ENCODE measurements at regions of chr12 and their contacts with region 1.

Region 1: GRCh38 chr12:51823875-51824565 is 24.5 kb downstream of the FIGNL2 start:
- DNase-seq: peak in 5 of 9 donors; percentile 27 to 47 (median 36)
- ATAC-seq: no peak
- H3K4me3 ChIP-seq: no peak overlapping the region
- H3K4me3 Mint-ChIP-seq: peak overlapping the region in 3 of 10 donors; percentile 4 to 17 (median 6)
- H3K27ac ChIP-seq: no peak overlapping the region
- H3K27ac Mint-ChIP-seq: peak overlapping the region in 8 of 9 donors; percentile 16 to 68 (median 54)
- H3K4me1 ChIP-seq: peaks cover 5 to 24% of the 10 kb centered on the region in 2 donors
- H3K4me1 Mint-ChIP-seq: peaks cover 29 to 41% (median 32%) of the 10 kb centered on the region in 7 donors
- H3K27me3 ChIP-seq: no peaks in the 10 kb centered on the region
- H3K27me3 Mint-ChIP-seq: peaks cover 0 to 14% (median 0%) of the 10 kb centered on the region in 5 donors

Region 2: DNA sequence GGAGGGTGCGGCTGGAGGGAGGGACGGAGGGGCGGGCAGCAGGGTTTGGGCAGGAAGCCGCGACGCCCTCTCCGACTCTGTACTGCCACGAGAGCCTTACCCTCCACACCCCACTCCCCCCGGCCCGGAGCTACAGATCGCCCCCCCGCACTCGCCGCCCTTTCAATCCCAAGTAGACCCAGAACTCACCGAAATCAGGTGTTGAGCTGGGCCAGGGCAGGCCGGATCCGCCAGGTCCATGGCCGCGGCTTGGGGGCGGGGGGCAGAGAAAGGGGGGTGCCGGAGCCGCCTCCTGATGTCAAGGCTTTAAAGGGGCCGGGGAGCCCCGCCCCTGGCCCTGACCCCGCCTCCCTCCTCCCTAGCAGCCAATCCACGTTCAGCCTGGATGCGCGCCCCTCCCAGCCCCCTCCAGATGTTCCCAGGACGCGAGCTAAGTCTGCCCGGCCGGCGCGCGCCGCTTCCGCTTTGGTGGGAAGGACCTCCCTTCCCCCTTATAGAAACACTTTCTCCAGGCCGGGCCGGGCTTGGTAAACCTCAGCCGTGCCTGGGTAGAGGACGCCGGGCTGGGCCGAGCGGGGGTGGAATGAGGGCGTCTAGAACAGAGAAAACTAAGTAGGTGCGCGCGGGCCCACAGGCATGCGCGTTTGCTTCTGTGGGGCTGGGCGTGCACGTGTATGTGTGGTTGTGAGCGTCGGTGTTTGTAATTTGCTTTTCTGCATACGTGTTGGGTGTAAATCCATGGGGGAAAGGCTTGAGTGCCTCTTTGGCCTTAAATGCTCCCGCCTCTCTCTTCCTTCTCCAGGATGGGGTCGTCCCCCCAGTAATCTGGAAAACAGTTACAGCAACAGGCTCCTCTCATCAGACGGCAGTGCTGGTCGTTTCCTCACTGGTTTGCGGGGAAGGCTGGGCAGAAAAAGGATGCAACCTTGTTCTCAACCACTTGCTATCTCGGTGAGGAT is 1995.6 kb before region 1 on chr12 and contains the start of gene NCKAP5L:
- CTCF ChIA-PET with region 1: no interaction called
- POLR2A ChIA-PET with region 1: no interaction called
- intact Hi-C with region 1: loop called in 1 of 2 experiments (anchors 5 kb)
- DNase-seq: peak; percentile 86 to 94 (median 93)
- ATAC-seq: peak; percentile 96
- H3K4me3 ChIP-seq: peak within 1 kb of the TSS; percentile 82
- H3K4me3 Mint-ChIP-seq: peak within 1 kb of the TSS; percentile 88 to 99 (median 96)
- H3K27ac ChIP-seq: peak within 1 kb of the TSS; percentile 79
- H3K27ac Mint-ChIP-seq: peak within 1 kb of the TSS; percentile 89 to 99 (median 95)
- H3K4me1 ChIP-seq: peaks cover 8 to 16% of the 10 kb centered on the region in 2 donors
- H3K4me1 Mint-ChIP-seq: peaks cover 7 to 42% (median 30%) of the 10 kb centered on the region in 7 donors
- H3K27me3 ChIP-seq: no peaks in the 10 kb centered on the region
- H3K27me3 Mint-ChIP-seq: peaks cover 0 to 13% (median 0%) of the 10 kb centered on the region in 5 donors
- total RNA-seq, gene NCKAP5L: 4.3 to 27.5 (median 12.0) TPM

Region 3: GRCh38 chr12:51531978-51532497 is 292.0 kb before region 1 on chr12:
- CTCF ChIA-PET with region 1: interaction called, 4 read pairs
- POLR2A ChIA-PET with region 1: no interaction called
- intact Hi-C with region 1: loop called in 1 of 2 experiments (anchors 1 kb)
- DNase-seq: peak; percentile 44 to 78 (median 68)
- ATAC-seq: peak; percentile 94
- H3K4me3 ChIP-seq: no peak overlapping the region
- H3K4me3 Mint-ChIP-seq: no peak overlapping the region
- H3K27ac ChIP-seq: no peak overlapping the region
- H3K27ac Mint-ChIP-seq: peak overlapping the region in 5 of 9 donors; percentile 11 to 52 (median 32)
- H3K4me1 ChIP-seq: peaks cover 0 to 4% of the 10 kb centered on the region in 2 donors
- H3K4me1 Mint-ChIP-seq: peaks cover 0 to 11% (median 6%) of the 10 kb centered on the region in 7 donors
- H3K27me3 ChIP-seq: no peaks in the 10 kb centered on the region
- H3K27me3 Mint-ChIP-seq: peaks cover 0 to 32% (median 4%) of the 10 kb centered on the region in 5 donors

Region 4: DNA sequence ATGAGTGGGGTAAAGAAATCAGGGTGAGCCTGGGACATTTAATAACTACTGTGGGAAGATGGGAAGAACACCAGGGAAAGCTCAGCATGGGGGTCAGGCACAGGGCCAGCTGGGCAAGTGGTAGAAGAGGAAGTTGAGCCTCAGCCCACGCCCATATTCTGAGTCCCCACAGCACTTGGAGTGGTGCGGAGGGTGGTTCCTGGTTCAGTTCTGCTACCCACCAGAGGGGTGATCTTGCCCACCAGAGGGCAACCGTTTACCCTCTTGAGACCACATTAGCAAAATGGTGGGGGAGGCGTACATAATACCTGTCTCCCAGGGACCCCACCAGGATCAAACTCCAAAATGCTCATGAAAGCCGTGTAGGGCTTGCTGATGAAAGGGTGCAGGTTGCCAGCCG is 47.1 kb after region 1 on chr12:
- CTCF ChIA-PET with region 1: interaction called, 3 read pairs
- POLR2A ChIA-PET with region 1: interaction called, 3 read pairs
- intact Hi-C with region 1: loop called (anchors 1 to 5 kb)
- DNase-seq: no peak
- ATAC-seq: peak; percentile 71
- H3K4me3 ChIP-seq: no peak overlapping the region
- H3K4me3 Mint-ChIP-seq: no peak overlapping the region
- H3K27ac ChIP-seq: no peak overlapping the region
- H3K27ac Mint-ChIP-seq: no peak overlapping the region
- H3K4me1 ChIP-seq: no peaks in the 10 kb centered on the region
- H3K4me1 Mint-ChIP-seq: peaks cover 6 to 19% (median 15%) of the 10 kb centered on the region in 7 donors
- H3K27me3 ChIP-seq: peaks cover 0 to 16% of the 10 kb centered on the region in 2 donors
- H3K27me3 Mint-ChIP-seq: peaks cover 40 to 49% (median 41%) of the 10 kb centered on the region in 5 donors

Region 5: DNA sequence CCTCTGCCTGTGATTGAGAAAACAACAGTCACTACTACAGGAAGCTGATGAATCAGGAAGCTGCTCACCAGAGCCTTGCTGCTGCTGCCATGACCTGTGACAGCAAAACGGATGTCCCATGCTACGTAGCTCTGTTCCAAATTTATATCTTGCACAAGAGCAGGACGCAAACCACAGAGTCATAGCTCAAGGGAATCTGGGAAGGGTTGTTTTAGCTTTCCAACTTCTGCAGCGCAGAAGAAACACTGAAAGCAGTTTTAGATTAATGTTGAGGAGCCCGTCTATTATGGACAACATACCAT is 62.0 kb after region 1 on chr12:
- CTCF ChIA-PET with region 1: no interaction called
- POLR2A ChIA-PET with region 1: interaction called, 12 read pairs
- intact Hi-C with region 1: no loop called
- DNase-seq: peak in 8 of 9 donors; percentile 27 to 71 (median 64)
- ATAC-seq: peak; percentile 95
- H3K4me3 ChIP-seq: peak overlapping the region; percentile 25
- H3K4me3 Mint-ChIP-seq: peak overlapping the region; percentile 8 to 77 (median 62)
- H3K27ac ChIP-seq: peak overlapping the region; percentile 1
- H3K27ac Mint-ChIP-seq: peak overlapping the region; percentile 86 to 97 (median 95)
- H3K4me1 ChIP-seq: peaks cover 0 to 5% of the 10 kb centered on the region in 2 donors
- H3K4me1 Mint-ChIP-seq: peaks cover 12 to 22% (median 16%) of the 10 kb centered on the region in 7 donors
- H3K27me3 ChIP-seq: no peaks in the 10 kb centered on the region
- H3K27me3 Mint-ChIP-seq: peaks cover 0 to 2% (median 0%) of the 10 kb centered on the region in 5 donors

Region 6: DNA sequence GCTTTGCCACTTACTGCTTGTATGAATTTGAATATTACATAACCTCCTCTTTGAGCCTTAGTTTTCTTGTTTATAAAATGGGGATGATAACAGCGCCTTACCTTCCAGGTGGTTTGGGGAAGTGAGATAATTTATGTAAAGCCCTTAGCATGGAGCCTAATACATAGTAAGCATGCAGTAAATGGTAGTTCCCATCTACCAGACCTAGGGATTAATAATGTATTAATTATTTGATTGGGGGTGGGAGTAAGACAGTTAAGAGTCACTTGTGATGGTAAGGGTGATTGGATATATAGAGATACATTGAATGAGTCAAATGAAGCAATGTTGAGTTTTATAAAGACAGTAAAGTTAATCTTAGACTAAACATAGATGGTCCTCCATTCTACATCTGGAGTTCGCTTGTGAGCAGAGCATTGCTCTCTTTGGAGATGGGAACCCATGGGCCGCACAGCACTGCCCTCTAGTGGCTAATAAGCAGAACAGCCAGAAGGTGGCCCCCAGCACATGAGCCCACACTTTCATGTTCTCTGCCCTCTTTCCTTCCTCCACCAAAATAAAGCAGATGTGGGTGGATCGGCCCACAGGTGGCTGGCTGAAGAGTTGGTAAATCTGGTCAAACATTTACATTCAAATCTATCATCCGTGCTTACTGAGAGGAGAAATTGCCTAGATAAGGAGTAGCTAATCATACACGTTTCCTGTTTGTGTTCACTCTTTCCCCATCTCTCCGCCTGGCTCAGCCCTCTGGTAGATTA is 156.2 kb after region 1 on chr12:
- CTCF ChIA-PET with region 1: no interaction called
- POLR2A ChIA-PET with region 1: no interaction called
- intact Hi-C with region 1: loop called in 1 of 2 experiments (anchors 5 kb)
- DNase-seq: peak; percentile 39 to 76 (median 65)
- ATAC-seq: peak; percentile 99
- H3K4me3 ChIP-seq: no peak overlapping the region
- H3K4me3 Mint-ChIP-seq: peak overlapping the region in 3 of 10 donors; percentile 7 to 45 (median 32)
- H3K27ac ChIP-seq: no peak overlapping the region
- H3K27ac Mint-ChIP-seq: peak overlapping the region in 5 of 9 donors; percentile 25 to 74 (median 48)
- H3K4me1 ChIP-seq: peaks cover 5 to 10% of the 10 kb centered on the region in 2 donors
- H3K4me1 Mint-ChIP-seq: peaks cover 24 to 32% (median 28%) of the 10 kb centered on the region in 7 donors
- H3K27me3 ChIP-seq: no peaks in the 10 kb centered on the region
- H3K27me3 Mint-ChIP-seq: peaks cover 0 to 5% (median 0%) of the 10 kb centered on the region in 5 donors

Region 7: DNA sequence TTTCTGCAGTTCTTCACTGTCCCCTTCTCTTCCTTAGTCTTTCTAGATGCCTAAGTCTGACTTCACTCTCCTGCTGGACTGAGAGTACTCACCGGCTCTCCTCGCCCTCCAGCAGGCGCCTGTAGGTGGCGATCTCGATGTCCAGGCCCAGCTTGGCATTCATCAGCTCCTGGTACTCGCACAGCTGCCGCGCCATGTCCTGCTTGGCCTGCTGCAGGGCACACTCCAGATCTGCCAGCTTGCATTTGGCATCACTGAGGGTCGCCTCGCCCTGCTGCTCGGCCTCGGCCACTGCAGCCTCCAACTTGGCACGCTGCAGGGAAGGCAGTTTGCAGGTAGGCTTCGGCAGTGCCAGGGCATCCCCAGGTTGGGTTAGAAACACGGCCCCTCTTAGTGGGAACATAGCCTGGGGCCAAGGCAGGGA is 556.3 kb after region 1 on chr12:
- CTCF ChIA-PET with region 1: no interaction called
- POLR2A ChIA-PET with region 1: no interaction called
- intact Hi-C with region 1: no loop called
- DNase-seq: no peak
- ATAC-seq: no peak
- H3K4me3 ChIP-seq: no peak overlapping the region
- H3K4me3 Mint-ChIP-seq: no peak overlapping the region
- H3K27ac ChIP-seq: no peak overlapping the region
- H3K27ac Mint-ChIP-seq: no peak overlapping the region
- H3K4me1 ChIP-seq: peaks cover 3 to 7% of the 10 kb centered on the region in 2 donors
- H3K4me1 Mint-ChIP-seq: peaks cover 7 to 12% (median 8%) of the 10 kb centered on the region in 7 donors
- H3K27me3 ChIP-seq: no peaks in the 10 kb centered on the region
- H3K27me3 Mint-ChIP-seq: peaks cover 0 to 15% (median 7%) of the 10 kb centered on the region in 5 donors